ENCODE measurements at regions of chr20 and their contacts with region 1.

Region 1: DNA sequence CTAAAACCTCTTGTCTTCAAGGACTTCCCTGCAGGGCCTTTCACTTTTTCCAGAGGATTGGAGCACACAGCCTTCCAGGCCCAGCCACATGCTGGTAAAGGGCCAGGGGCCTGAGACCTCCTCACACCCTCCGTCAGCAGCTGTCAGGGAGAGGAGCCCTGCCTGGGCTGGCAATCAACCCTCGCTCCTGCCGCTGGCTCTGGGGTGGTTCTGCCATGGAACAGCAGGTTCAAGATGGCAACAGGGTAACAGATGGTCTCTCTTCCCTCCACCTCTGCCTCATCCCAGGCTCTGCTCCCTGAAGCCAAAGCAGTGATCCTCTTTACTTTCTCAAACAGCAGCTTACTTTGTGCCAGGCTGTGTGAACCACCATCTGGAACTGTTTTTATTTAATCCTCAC is 23.8 kb downstream of the PCNA start:
- DNase-seq: peak; percentile 76
- H3K4me3 ChIP-seq: no peak overlapping the region
- H3K27ac ChIP-seq: no peak overlapping the region
- H3K4me1 ChIP-seq: peaks cover 0 to 33% (median 9%) of the 10 kb centered on the region in 6 donors
- H3K27me3 ChIP-seq: no peaks in the 10 kb centered on the region
- CTCF ChIP-seq: no peak
- POLR2A ChIP-seq: no peak

Region 2: DNA sequence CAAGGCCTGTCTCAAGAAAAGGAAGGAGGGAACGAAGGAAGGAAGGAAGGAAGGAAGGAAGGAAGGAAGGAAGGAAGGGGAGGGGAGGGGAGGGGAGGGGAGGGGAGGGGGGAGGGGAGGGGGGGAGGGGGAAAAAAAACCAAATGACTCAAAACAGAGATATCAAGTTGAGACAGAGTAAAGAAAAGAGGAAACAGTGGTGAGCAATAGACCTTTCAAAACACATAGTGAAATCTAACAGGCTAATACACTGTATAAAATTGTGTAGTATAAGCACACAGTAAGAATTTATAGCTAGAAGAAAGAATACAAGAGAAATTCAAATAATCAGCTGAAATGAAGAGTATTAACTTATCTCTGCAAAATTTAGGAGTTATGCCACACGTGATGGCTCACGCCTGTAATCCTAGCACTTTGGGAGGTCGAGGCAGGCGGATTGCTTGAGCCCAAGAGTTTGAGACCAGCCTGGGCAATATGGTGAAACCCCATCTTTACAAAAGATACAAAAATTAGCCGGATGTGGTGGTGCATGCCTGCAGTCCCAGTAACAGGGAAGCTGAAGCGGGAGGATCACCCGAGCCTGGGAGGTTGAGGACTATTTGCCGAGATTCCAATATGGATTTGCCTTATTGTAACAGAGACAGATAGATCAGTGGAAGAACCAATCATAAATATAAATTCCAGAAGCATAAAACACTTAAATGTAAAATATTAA is 251.0 kb before region 1 on chr20:
- intact Hi-C with region 1: no loop called
- DNase-seq: no peak
- H3K4me3 ChIP-seq: peak overlapping the region in 1 of 8 donors; percentile 6
- H3K27ac ChIP-seq: peak overlapping the region in 6 of 8 donors; percentile 31 to 76 (median 58)
- H3K4me1 ChIP-seq: peaks cover 0 to 26% (median 5%) of the 10 kb centered on the region in 6 donors
- H3K27me3 ChIP-seq: no peaks in the 10 kb centered on the region
- CTCF ChIP-seq: no peak
- POLR2A ChIP-seq: no peak

Region 3: DNA sequence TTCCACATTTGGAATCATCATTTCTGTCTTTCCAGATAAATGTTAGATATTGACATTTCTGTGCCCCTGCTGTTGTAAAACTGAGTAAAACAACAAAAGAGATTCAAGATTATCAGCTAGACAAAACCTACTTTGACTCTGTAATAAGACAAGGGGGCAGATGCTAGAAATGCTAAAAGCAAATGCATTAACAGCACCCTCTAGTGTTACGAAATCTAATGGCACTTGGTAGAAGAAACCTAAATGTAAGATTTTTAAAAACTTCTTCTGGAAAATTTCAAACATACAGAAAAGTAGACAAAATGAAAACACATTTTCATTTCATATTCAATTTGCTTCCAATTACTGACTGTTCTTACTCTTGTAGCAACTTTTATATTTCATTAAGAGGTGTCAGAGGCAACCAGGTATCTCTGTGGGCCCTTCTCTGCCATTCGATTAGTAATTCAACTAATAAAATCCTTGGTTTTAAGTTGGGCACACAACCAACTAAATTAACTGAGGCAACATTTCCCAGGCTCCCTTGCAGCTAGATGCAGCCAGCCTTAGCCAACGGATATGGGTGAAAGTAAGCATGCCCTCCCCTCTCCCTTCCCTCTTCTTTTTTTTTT is 139.6 kb before region 1 on chr20:
- intact Hi-C with region 1: loop called (anchors 5 kb)
- DNase-seq: no peak
- H3K4me3 ChIP-seq: no peak overlapping the region
- H3K27ac ChIP-seq: no peak overlapping the region
- H3K4me1 ChIP-seq: peaks cover 0 to 37% (median 14%) of the 10 kb centered on the region in 6 donors
- H3K27me3 ChIP-seq: no peaks in the 10 kb centered on the region
- CTCF ChIP-seq: peak; percentile 64 to 87 (median 79)
- POLR2A ChIP-seq: no peak

Measured in spleen (tissue), 13 donors.